ENCODE measurements at regions of chr3 and their contacts with region 1.

Region 1: DNA sequence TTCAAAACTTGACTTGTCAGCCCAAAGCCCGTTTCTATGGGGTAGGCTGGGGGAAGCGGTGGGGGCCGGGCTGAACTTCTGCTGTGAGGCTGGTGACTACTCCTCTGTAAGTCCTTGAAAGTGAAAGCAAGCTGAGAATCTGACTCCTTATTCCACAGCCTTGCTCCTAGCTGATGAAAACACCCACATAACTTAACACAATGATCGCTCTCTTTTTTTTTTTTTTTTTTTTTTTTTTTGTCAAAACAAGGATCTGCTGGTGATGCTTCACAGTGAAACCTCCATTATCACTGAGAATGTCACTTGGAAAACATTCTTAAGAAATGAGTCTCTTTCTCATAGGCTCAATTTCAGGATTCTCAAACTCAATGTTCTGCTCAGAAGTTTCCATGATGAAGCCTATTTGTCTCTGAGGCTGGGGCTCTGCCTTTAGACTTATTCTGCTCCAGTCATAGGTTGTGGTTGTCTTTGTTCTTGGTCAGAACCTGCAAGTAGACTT is 31.4 kb upstream of the TKT start:
- DNase-seq: no peak
- ATAC-seq: no peak
- H3K4me3 ChIP-seq: no peak overlapping the region
- H3K4me3 Mint-ChIP-seq: no peak overlapping the region
- H3K27ac ChIP-seq: no peak overlapping the region
- H3K27ac Mint-ChIP-seq: peak overlapping the region in 1 of 2 donors; percentile 39
- H3K4me1 ChIP-seq: no peaks in the 10 kb centered on the region
- H3K4me1 Mint-ChIP-seq: no peaks in the 10 kb centered on the region
- H3K27me3 ChIP-seq: no peaks in the 10 kb centered on the region
- H3K27me3 Mint-ChIP-seq: no peaks in the 10 kb centered on the region

Region 2: DNA sequence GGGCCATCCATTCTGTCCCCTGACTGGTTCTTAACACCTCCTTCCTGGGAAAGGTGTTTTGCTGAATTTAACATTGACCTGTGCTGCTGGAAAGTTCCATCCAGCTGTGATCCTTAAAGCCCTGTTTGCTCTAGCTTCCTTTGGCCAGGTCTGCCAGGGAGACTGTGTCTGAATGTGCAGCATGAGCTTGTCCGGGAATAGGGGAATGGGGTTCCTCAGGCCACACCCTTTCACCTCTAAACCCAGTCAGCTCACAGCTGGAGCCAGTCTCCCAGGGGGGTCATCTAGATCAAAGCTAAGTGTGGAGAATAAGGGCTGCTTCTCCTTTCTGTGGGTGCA is 384.8 kb after region 1 on chr3:
- CTCF ChIA-PET with region 1: no interaction called
- POLR2A ChIA-PET with region 1: interaction called in 1 of 2 experiments, 10 read pairs
- DNase-seq: no peak
- ATAC-seq: no peak
- H3K4me3 ChIP-seq: no peak overlapping the region
- H3K4me3 Mint-ChIP-seq: no peak overlapping the region
- H3K27ac ChIP-seq: no peak overlapping the region
- H3K27ac Mint-ChIP-seq: no peak overlapping the region
- H3K4me1 ChIP-seq: no peaks in the 10 kb centered on the region
- H3K4me1 Mint-ChIP-seq: no peaks in the 10 kb centered on the region
- H3K27me3 ChIP-seq: peaks cover 0 to 15% of the 10 kb centered on the region in 2 experiments
- H3K27me3 Mint-ChIP-seq: peaks cover 29 to 33% of the 10 kb centered on the region in 2 donors

Measured in T-cell (primary cell).